CD8-positive, alpha-beta memory T cell (primary cell): ENCODE measurements at regions of chr1 and their contacts with region 1.

Region 1: GRCh38 chr1:89483010-89483756 is 41.4 kb upstream of the LRRC8B start:
- DNase-seq: peak; percentile 54 to 78 (median 59)
- H3K4me3 ChIP-seq: no peak overlapping the region
- H3K4me3 Mint-ChIP-seq: no peak overlapping the region
- H3K27ac ChIP-seq: no peak overlapping the region
- H3K27ac Mint-ChIP-seq: no peak overlapping the region
- H3K4me1 ChIP-seq: no peaks in the 10 kb centered on the region
- H3K4me1 Mint-ChIP-seq: peaks cover 4 to 14% (median 13%) of the 10 kb centered on the region in 3 donors
- H3K27me3 ChIP-seq: no peaks in the 10 kb centered on the region
- H3K27me3 Mint-ChIP-seq: peaks cover 2 to 4% of the 10 kb centered on the region in 2 donors

Region 2: GRCh38 chr1:89465201-89465600 is 18.0 kb before region 1 on chr1:
- CTCF ChIA-PET with region 1: no interaction called
- POLR2A ChIA-PET with region 1: no interaction called
- DNase-seq: no peak
- H3K4me3 ChIP-seq: no peak overlapping the region
- H3K4me3 Mint-ChIP-seq: no peak overlapping the region
- H3K27ac ChIP-seq: no peak overlapping the region
- H3K27ac Mint-ChIP-seq: no peak overlapping the region
- H3K4me1 ChIP-seq: peaks cover 12% of the 10 kb centered on the region
- H3K4me1 Mint-ChIP-seq: peaks cover 9 to 13% (median 9%) of the 10 kb centered on the region in 3 donors
- H3K27me3 ChIP-seq: no peaks in the 10 kb centered on the region
- H3K27me3 Mint-ChIP-seq: peaks cover 12 to 56% of the 10 kb centered on the region in 2 donors

Region 3: GRCh38 chr1:89598450-89599331 is 115.5 kb after region 1 on chr1:
- CTCF ChIA-PET with region 1: interaction called, 10 read pairs
- POLR2A ChIA-PET with region 1: no interaction called
- DNase-seq: peak in 2 of 5 donors; percentile 28 to 38
- H3K4me3 ChIP-seq: no peak overlapping the region
- H3K4me3 Mint-ChIP-seq: no peak overlapping the region
- H3K27ac ChIP-seq: no peak overlapping the region
- H3K27ac Mint-ChIP-seq: peak overlapping the region in 6 of 8 donors; percentile 6 to 72 (median 22)
- H3K4me1 ChIP-seq: peaks cover 43% of the 10 kb centered on the region
- H3K4me1 Mint-ChIP-seq: peaks cover 48 to 80% (median 75%) of the 10 kb centered on the region in 3 donors
- H3K27me3 ChIP-seq: no peaks in the 10 kb centered on the region
- H3K27me3 Mint-ChIP-seq: no peaks in the 10 kb centered on the region

Region 4: DNA sequence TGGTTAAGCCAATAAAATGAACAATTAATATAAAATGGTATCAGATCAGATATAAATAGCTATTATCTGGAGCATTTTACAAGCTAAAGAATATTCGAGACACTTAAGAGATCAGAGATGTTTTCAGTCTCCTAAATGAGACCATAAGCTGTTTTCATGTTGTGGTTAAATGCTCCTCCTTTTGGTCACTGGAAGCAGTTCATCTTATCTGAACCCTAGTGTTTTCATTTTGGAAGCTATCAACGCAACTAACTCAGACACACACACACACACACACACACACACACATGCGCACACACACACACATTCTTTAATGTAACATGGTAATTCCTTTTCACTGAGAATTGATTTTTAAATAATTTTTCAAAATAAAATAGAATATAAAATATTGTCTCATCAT is 139.7 kb after region 1 on chr1:
- CTCF ChIA-PET with region 1: interaction called, 24 read pairs
- POLR2A ChIA-PET with region 1: no interaction called
- DNase-seq: peak in 1 of 5 donors; percentile 32
- H3K4me3 ChIP-seq: no peak overlapping the region
- H3K4me3 Mint-ChIP-seq: peak overlapping the region in 1 of 7 donors; percentile 14
- H3K27ac ChIP-seq: no peak overlapping the region
- H3K27ac Mint-ChIP-seq: peak overlapping the region in 1 of 8 donors; percentile 76
- H3K4me1 ChIP-seq: peaks cover 32% of the 10 kb centered on the region
- H3K4me1 Mint-ChIP-seq: peaks cover 35 to 75% (median 73%) of the 10 kb centered on the region in 3 donors
- H3K27me3 ChIP-seq: no peaks in the 10 kb centered on the region
- H3K27me3 Mint-ChIP-seq: no peaks in the 10 kb centered on the region

Region 5: GRCh38 chr1:89780721-89781120 is 297.5 kb after region 1 on chr1:
- CTCF ChIA-PET with region 1: no interaction called
- POLR2A ChIA-PET with region 1: no interaction called
- DNase-seq: peak in 1 of 5 donors; percentile 37
- H3K4me3 ChIP-seq: no peak overlapping the region
- H3K4me3 Mint-ChIP-seq: peak overlapping the region in 2 of 7 donors; percentile 4 to 32
- H3K27ac ChIP-seq: no peak overlapping the region
- H3K27ac Mint-ChIP-seq: peak overlapping the region in 2 of 8 donors; percentile 61 to 74
- H3K4me1 ChIP-seq: peaks cover 13% of the 10 kb centered on the region
- H3K4me1 Mint-ChIP-seq: peaks cover 25 to 27% (median 27%) of the 10 kb centered on the region in 3 donors
- H3K27me3 ChIP-seq: no peaks in the 10 kb centered on the region
- H3K27me3 Mint-ChIP-seq: no peaks in the 10 kb centered on the region